H1 (cell line): ENCODE measurements at regions of chr5 and their contacts with region 1.

Region 1: GRCh38 chr5:177425801-177426565 is 493 bp upstream of the GRK6 start:
- DNase-seq: peak; percentile 97 to 100
- H3K4me3 ChIP-seq: peak overlapping the region; percentile 52 to 71 (median 64)
- H3K27ac ChIP-seq: peak overlapping the region; percentile 86; the same call in 1 of the 2 replicates
- H3K4me1 ChIP-seq: peaks cover 4 to 14% (median 9%) of the 10 kb centered on the region in 4 experiments; a peak in 6 of 7 replicates
- H3K27me3 ChIP-seq: no peaks in the 10 kb centered on the region
- CTCF ChIP-seq: no peak
- EP300 ChIP-seq: peak in 1 of 2 experiments; percentile 69; a peak in 1 of 3 replicates
- POLR2A ChIP-seq: peak in 1 of 2 experiments; percentile 95; a peak in 2 of 3 replicates
- RAD21 ChIP-seq: no peak

Region 2: DNA sequence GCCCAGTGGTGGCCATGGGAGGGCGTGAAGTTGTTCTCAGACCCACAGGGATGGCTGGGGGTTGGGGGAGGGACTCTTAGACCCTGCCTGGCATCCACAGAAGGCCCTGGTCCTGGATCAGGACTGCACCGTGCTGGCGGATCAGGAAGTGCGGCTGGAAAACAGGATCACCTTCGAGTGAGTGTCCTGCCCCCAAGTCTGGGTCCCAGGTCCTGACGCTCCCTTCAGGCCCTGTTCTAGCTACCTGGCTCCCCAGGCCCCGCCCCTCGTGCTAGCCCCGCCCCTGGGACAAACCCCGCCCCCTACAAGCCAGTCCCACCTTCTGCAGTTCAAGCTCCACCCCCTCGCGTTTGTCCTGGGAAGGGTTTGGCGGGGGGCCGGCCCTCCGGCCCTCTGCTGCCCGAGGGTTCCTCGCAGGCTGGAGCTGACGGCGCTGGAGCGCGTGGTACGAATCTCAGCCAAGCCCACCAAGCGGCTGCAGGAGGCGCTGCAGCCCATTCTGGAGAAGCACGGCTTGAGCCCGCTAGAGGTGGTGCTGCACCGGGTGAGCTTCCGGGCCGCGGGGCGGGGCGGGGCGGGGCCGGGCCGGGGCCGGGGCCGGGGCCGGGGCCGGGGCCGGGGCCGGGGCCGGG is 55.4 kb before region 1 on chr5:
- CTCF ChIA-PET with region 1: interaction called, 24 read pairs
- POLR2A ChIA-PET with region 1: interaction called, 6 read pairs
- DNase-seq: peak; percentile 93 to 99
- H3K4me3 ChIP-seq: peak overlapping the region; percentile 23 to 63 (median 58); a peak in 6 of 8 replicates
- H3K27ac ChIP-seq: 0 out of 2 replicates have a peak overlapping the region, but pooled peaks have one; percentile 60
- H3K4me1 ChIP-seq: peaks cover 8 to 36% (median 31%) of the 10 kb centered on the region in 4 experiments
- H3K27me3 ChIP-seq: peaks cover 1 to 14% (median 12%) of the 10 kb centered on the region in 4 experiments; a peak in 4 of 7 replicates
- CTCF ChIP-seq: peak in 2 of 3 experiments; percentile 79 to 98; a peak in 3 of 4 replicates
- EP300 ChIP-seq: no peak
- POLR2A ChIP-seq: 0 out of 3 replicates have a peak, but pooled peaks of 1 of the 2 experiments have one; percentile 16
- RAD21 ChIP-seq: peak; percentile 66 to 75

Region 3: DNA sequence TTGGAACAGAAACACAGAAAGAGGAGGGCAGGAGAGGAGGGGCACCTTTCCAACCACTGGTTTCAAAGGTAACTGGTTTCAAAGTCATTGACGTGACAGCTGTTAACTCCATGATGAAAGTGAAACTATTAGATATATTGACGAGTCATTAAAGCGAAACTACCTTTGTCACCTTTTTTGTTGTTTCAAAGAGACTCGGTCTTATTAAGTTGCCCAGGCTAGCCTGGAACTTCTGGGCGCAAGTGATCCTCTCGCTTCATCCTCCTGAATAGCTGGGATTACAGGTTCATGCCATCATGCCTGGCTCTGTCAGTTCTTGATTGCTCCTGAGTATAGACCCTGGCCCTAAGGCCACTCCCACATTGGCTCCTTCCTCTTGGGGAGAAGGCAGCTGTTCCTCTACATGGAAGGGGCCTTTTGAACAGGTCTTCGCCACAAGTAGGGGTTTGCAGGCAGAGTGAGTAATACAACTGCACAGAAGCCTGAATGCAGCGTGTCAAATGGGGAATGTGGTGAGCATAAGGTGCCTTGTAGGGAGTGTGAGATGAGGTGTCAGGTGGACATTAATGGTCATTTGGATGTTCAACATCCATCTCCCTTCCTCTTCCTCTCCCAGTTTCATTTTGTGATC is 13.3 kb before region 1 on chr5:
- CTCF ChIA-PET with region 1: interaction called, 11 read pairs
- POLR2A ChIA-PET with region 1: interaction called, 14 read pairs
- DNase-seq: no peak
- H3K4me3 ChIP-seq: no peak overlapping the region
- H3K27ac ChIP-seq: no peak overlapping the region
- H3K4me1 ChIP-seq: no peaks in the 10 kb centered on the region; a peak in 1 of 7 replicates
- H3K27me3 ChIP-seq: peaks cover 0 to 14% (median 2%) of the 10 kb centered on the region in 4 experiments; a peak in 5 of 7 replicates
- CTCF ChIP-seq: no peak
- EP300 ChIP-seq: no peak
- POLR2A ChIP-seq: no peak
- RAD21 ChIP-seq: no peak